Panc1 (cell line): ENCODE measurements at regions of chr7 and their contacts with region 1.

Region 1: DNA sequence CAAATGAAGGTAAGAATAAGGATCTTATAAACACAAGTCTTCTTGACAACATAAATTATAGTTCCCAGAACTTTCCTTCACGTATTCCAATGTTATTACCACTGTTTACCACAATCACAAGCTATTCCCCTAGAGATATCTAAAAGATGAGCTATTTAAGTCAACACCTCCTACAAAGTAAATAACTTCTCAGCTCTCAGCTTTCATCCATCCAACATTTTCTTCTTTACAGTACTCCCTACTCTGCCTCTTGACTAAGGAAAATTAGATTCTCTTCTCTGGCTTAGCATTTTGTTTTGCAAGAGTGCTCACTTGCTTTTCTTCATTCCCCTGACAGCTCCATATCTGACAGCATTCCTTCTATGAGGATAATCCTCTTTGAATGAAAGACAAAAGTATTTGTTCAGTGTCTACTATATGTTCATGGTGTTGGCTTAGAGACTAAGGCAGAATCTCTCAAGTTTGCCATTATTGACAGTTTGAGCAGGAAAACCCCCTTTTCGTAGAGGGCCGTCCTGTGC is 93.0 kb upstream of the IL6 start:
- DNase-seq: no peak
- ATAC-seq: no peak
- H3K4me3 ChIP-seq: no peak overlapping the region
- H3K27ac ChIP-seq: no peak overlapping the region
- H3K4me1 ChIP-seq: no peaks in the 10 kb centered on the region
- H3K27me3 ChIP-seq: no peaks in the 10 kb centered on the region
- CTCF ChIP-seq: no peak

Region 2: GRCh38 chr7:22565315-22565811 is 68.7 kb before region 1 on chr7:
- CTCF ChIA-PET with region 1: interaction called, 11 read pairs
- POLR2A ChIA-PET with region 1: no interaction called
- in situ Hi-C with region 1: no loop called
- intact Hi-C with region 1: no loop called
- DNase-seq: peak; percentile 66
- ATAC-seq: no peak
- H3K4me3 ChIP-seq: peak overlapping the region in 1 of 2 experiments; percentile 61; a peak in 2 of 4 replicates
- H3K27ac ChIP-seq: peak overlapping the region; percentile 85
- H3K4me1 ChIP-seq: peaks cover 49% of the 10 kb centered on the region
- H3K27me3 ChIP-seq: no peaks in the 10 kb centered on the region
- CTCF ChIP-seq: no peak